Prostate gland (tissue), 2 donors: ENCODE measurements at regions of chr10 and their contacts with region 1.

Region 1: GRCh38 chr10:113704637-113705343 is 25.1 kb downstream of the CASP7 start:
- DNase-seq: no peak
- H3K4me3 ChIP-seq: no peak overlapping the region
- H3K27ac ChIP-seq: no peak overlapping the region
- H3K4me1 ChIP-seq: no peaks in the 10 kb centered on the region
- H3K27me3 ChIP-seq: no peaks in the 10 kb centered on the region
- CTCF ChIP-seq: peak in 3 of 4 experiments; percentile 64 to 72 (median 65)
- POLR2A ChIP-seq: no peak

Region 2: GRCh38 chr10:113626809-113627370 is 77.9 kb before region 1 on chr10:
- intact Hi-C with region 1: no loop called
- DNase-seq: no peak
- H3K4me3 ChIP-seq: no peak overlapping the region
- H3K27ac ChIP-seq: no peak overlapping the region
- H3K4me1 ChIP-seq: no peaks in the 10 kb centered on the region
- H3K27me3 ChIP-seq: no peaks in the 10 kb centered on the region
- CTCF ChIP-seq: no peak
- POLR2A ChIP-seq: no peak

Region 3: DNA sequence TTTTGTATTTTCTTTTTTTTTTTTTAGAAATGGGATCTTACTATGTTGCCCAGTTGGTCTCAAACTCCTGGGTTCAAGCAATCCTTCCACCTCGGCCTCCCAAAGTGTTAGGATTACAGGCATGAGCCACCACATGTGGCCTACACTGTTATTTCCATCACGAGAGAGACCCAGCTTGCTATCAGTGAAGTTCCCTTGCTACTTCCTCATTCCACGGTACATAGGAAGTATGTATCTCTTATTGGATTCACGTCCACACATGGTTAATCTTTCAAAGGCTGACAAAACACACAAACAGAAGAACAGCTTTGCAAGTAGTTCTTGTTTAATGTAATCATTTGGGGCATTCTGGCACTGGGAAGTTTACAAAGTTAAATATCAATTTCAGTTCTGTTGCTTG is 98.2 kb after region 1 on chr10:
- intact Hi-C with region 1: loop called (anchors 5 kb)
- DNase-seq: no peak
- H3K4me3 ChIP-seq: no peak overlapping the region
- H3K27ac ChIP-seq: peak overlapping the region; percentile 25 to 26
- H3K4me1 ChIP-seq: peaks cover 8% of the 10 kb centered on the region
- H3K27me3 ChIP-seq: no peaks in the 10 kb centered on the region
- CTCF ChIP-seq: no peak
- POLR2A ChIP-seq: no peak

Region 4: DNA sequence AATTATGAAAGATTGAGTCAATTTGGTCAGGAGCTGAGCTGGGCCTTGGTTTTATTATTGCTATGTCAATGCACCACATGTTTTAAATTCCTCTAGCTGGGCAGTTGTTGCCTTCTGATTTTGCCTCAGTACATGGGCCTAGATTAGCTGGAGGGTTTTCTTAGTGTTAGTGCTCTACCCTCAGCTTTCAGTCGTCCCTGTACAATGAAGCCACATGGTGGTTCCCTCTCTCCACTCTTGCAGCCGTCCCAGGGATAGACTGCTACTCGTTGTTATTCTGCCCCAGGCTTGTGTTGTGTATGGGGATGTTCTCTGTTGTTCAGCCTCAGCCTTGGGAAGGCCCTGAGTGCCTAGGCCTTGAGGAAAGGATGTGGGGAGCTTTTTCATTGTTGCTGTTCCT is 186.7 kb after region 1 on chr10:
- intact Hi-C with region 1: loop called (anchors 10 kb)
- DNase-seq: no peak
- H3K4me3 ChIP-seq: no peak overlapping the region
- H3K27ac ChIP-seq: no peak overlapping the region
- H3K4me1 ChIP-seq: no peaks in the 10 kb centered on the region
- H3K27me3 ChIP-seq: no peaks in the 10 kb centered on the region
- CTCF ChIP-seq: no peak
- POLR2A ChIP-seq: no peak

Region 5: GRCh38 chr10:114103284-114103683 is 398.5 kb after region 1 on chr10:
- intact Hi-C with region 1: loop called (anchors 2 kb)
- DNase-seq: peak; percentile 34
- H3K4me3 ChIP-seq: no peak overlapping the region
- H3K27ac ChIP-seq: no peak overlapping the region
- H3K4me1 ChIP-seq: no peaks in the 10 kb centered on the region
- H3K27me3 ChIP-seq: no peaks in the 10 kb centered on the region
- CTCF ChIP-seq: peak; percentile 29 to 81 (median 64)
- POLR2A ChIP-seq: no peak